ENCODE measurements at regions of chr14 and their contacts with region 1.

Region 1: GRCh38 chr14:105581551-105582341 is 55.4 kb downstream of the TMEM121 start:
- DNase-seq: no peak
- H3K4me3 ChIP-seq: no peak overlapping the region
- H3K27ac ChIP-seq: no peak overlapping the region
- H3K4me1 ChIP-seq: no peaks in the 10 kb centered on the region
- H3K27me3 ChIP-seq: peaks cover 2% of the 10 kb centered on the region; the same call in 1 of the 2 replicates
- CTCF ChIP-seq: no peak

Region 2: DNA sequence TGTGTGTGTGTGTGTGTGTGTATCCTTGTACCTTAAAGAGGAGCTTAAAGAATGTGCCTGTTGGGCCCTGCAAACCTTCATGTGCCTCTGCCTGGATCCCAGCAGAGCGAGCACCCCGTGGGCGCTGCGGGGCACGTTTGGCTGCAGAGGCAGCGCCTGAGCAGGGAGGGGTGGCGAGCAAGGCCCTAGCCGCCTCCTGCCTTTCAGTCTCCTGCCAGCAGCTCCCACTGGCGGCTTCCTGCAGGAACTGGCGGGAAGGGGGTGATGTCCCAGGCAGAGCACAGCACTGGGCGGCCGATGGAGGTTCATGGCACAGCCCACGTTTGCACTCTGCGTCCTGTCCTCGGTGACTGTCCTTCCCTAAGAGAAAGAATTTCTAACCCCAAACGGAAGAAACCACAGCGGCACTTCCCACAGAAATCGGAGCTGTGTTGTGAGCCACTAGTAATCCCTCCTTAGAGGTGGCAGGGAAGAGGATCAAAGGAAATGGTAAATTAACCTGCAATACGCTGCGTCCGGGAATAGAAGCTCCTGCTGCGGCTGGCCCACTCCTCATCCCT is 761.0 kb before region 1 on chr14:
- CTCF ChIA-PET with region 1: no interaction called
- POLR2A ChIA-PET with region 1: no interaction called
- intact Hi-C with region 1: no loop called
- DNase-seq: peak in 1 of 2 experiments; percentile 11
- H3K4me3 ChIP-seq: no peak overlapping the region
- H3K27ac ChIP-seq: no peak overlapping the region
- H3K4me1 ChIP-seq: peaks cover 11% of the 10 kb centered on the region; the same call in 1 of the 2 replicates
- H3K27me3 ChIP-seq: no peaks in the 10 kb centered on the region
- CTCF ChIP-seq: no peak

Region 3: GRCh38 chr14:105700622-105701288 is 119.0 kb after region 1 on chr14:
- CTCF ChIA-PET with region 1: no interaction called
- POLR2A ChIA-PET with region 1: no interaction called
- intact Hi-C with region 1: loop called (anchors 5 kb)
- DNase-seq: no peak
- H3K4me3 ChIP-seq: no peak overlapping the region
- H3K27ac ChIP-seq: no peak overlapping the region
- H3K4me1 ChIP-seq: no peaks in the 10 kb centered on the region
- H3K27me3 ChIP-seq: no peaks in the 10 kb centered on the region
- CTCF ChIP-seq: no peak

Measured in PC-9 (cell line).